ENCODE measurements at regions of chr1 and their contacts with region 1.

Region 1: DNA sequence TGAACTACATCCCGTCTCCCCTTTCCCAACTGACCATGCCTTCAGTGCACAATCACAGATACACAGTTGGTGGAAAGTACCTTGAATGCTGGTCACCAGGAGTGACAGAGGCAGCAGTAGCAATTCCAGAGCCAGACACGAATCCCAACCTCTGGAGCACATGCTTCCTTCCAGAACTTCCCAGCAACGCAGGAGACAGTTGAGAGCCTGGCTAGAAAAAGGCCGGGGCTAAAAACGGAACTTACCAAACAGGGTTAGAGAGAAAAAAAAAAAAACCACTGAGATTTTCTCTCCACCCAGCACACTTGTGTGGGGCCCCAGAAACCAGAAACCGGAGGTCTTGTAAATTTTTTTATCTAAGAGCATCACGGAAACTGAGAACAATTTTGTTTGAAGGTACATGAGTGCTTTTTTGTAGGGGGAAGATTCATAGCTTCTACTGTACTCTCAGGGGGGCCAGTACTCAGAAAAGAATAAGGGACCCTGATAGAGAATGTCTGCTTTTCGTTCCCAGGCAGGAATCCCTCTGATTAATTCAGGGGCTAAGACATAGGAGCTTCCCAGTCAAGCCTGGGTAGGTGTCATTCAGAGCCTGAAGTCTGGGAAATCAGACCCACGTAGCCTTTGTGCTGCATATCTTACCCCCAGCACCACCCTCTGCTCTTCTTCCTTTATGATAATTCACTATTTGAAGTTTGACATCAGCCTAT is at the start of gene CD48:
- DNase-seq: peak; percentile 53
- ATAC-seq: peak; percentile 38
- H3K4me3 Mint-ChIP-seq: no peak within 1 kb of the TSS
- H3K27ac Mint-ChIP-seq: no peak within 1 kb of the TSS
- H3K4me1 Mint-ChIP-seq: peaks cover 30% of the 10 kb centered on the region
- H3K27me3 Mint-ChIP-seq: no peaks in the 10 kb centered on the region
- total RNA-seq, gene CD48: 379 to 386 TPM

Region 2: DNA sequence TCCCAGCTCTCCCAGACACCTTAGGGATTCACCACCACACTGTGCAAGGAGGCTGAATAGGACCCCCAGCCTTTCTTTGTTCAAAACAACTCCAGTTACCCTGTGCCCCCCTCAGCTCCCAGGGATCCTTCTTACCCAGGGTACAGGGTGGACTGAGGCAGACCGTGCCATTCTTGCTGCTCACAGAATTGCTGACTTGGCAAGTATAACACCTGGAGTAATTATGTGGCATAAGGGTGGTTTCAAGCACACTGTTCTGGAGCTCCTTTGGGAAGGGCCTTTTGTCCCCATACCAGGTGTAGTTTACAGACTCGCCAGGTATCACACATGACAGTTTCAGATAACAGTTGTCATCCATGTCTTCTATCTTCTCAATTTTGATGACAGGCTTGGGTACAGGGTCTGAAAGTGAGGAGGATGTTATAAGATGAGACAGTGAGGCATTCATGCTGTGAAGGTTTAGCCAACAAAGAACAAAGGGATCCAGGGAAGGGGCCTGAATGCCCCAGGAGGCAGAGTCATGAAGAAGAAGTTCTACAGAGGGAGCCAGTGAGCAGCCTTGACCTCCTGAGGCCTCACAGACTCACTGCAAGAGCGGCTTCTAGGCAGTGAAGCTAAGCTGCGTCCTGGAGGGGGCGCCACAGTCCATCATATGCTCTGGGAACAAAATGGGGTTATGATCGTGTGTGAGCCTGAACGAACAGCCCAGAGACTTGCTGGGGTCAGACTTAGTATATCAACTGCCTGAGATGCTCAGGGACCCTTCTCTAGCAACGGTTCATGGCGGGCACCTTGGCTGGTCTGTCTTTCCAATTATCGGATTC is 30.5 kb before region 1 on chr1:
- POLR2A ChIA-PET with region 1: interaction called, 56 read pairs
- DNase-seq: peak; percentile 90
- ATAC-seq: peak; percentile 75
- H3K4me3 Mint-ChIP-seq: peak overlapping the region; percentile 76
- H3K27ac Mint-ChIP-seq: peak overlapping the region; percentile 88
- H3K4me1 Mint-ChIP-seq: peaks cover 73% of the 10 kb centered on the region
- H3K27me3 Mint-ChIP-seq: no peaks in the 10 kb centered on the region

Measured in activated naive CD8-positive, alpha-beta T cell treated with anti-CD3 and anti-CD28 coated beads, Interleukin-2, amount 10 ng/mL, durations not matched to agents 7 days and 5 days (primary cell).